ENCODE measurements at regions of chr1 and their contacts with region 1.

Region 1: GRCh38 chr1:23613191-23614031 is 54.1 kb upstream of the ID3 start:
- DNase-seq: peak; percentile 91
- H3K4me3 Mint-ChIP-seq: peak overlapping the region; percentile 14
- H3K27ac Mint-ChIP-seq: peak overlapping the region; percentile 88
- H3K4me1 Mint-ChIP-seq: peaks cover 71% of the 10 kb centered on the region
- H3K27me3 Mint-ChIP-seq: no peaks in the 10 kb centered on the region

Region 2: DNA sequence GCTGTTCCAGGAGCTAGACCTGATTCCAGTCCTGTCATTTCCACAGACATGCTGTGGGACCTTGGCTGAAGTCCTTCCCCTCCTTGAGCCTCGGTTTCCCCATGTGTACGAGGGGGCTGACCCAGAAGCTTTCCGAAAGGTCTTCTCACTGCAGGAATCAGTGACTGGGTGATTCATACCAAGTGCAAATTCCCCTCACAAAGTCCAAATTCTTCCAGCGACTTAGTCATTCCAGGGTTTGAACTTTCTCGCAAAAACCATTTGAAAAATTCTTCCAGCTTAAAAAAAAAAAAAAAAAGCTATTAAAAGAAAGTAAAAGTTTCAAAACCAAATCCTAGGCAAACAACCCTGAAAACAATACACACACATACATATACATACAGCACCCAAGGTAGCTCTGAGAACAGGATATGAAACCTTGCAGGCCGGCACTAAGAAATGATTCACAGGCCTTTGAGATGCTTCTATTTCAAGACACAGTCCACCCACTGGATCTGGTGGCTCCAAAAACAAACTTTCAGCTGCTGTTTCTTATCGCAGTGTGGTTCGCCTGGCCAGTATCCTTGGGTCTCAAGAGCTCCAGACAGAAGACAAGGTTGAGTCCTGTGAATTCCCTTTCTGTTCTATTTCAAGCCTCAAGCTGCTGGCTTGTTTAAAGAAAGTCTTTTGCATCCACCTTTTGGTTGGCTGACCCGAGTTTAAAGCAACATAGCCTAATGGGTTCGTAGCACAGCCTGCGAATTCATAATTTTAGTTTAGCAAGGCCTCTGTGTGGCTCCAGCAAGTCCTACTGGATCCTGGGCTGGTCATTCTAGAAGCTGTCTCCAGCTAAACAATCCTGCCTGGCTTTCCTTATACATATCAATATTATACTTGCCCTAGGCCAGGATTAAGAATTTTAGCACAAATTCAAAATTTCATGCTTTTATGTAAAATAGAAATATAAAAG is 36.1 kb before region 1 on chr1:
- CTCF ChIA-PET with region 1: no interaction called
- intact Hi-C with region 1: loop called (anchors 1 kb)
- DNase-seq: peak; percentile 77
- H3K4me3 Mint-ChIP-seq: peak overlapping the region; percentile 32
- H3K27ac Mint-ChIP-seq: peak overlapping the region; percentile 78
- H3K4me1 Mint-ChIP-seq: peaks cover 29% of the 10 kb centered on the region
- H3K27me3 Mint-ChIP-seq: no peaks in the 10 kb centered on the region

Region 3: GRCh38 chr1:23591460-23592208 is 21.8 kb before region 1 on chr1:
- CTCF ChIA-PET with region 1: interaction called, 8 read pairs
- intact Hi-C with region 1: loop called (anchors 1 kb)
- DNase-seq: peak; percentile 88
- H3K4me3 Mint-ChIP-seq: peak overlapping the region; percentile 34
- H3K27ac Mint-ChIP-seq: peak overlapping the region; percentile 85
- H3K4me1 Mint-ChIP-seq: peaks cover 68% of the 10 kb centered on the region
- H3K27me3 Mint-ChIP-seq: no peaks in the 10 kb centered on the region

Region 4: DNA sequence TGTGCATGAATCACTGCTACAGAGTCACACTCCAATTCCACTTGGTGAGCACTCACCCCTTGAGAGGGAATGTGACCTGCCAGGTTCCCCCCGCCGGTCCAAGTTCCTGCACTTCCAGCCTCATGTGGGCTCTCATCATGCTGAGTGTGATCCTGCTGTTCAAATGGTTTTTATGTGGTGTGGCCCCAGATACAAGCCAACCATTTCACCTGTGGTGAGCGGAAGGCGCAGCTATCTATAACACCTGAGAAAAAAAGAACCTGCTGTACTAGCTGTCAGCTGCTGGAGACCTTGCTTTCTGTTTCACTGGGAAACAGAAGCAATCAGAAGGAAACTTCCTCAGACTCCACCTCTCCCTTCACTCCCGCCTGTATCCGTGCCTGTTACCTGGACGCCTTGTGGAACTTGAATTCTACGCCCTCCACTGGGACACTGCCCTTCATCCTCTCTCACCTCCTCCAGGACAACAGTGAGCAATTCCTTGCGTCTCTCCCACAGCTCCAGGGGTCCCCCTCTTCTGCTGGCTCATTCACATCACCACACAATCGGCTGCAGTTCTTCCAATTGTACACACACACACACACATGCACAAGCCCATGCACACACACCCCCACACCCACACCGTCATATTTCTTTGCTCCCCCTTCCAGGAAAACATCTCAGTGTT is 13.8 kb after region 1 on chr1:
- CTCF ChIA-PET with region 1: interaction called, 4 read pairs
- intact Hi-C with region 1: loop called (anchors 1 kb)
- DNase-seq: peak; percentile 63
- H3K4me3 Mint-ChIP-seq: peak overlapping the region; percentile 82
- H3K27ac Mint-ChIP-seq: peak overlapping the region; percentile 83
- H3K4me1 Mint-ChIP-seq: peaks cover 53% of the 10 kb centered on the region
- H3K27me3 Mint-ChIP-seq: no peaks in the 10 kb centered on the region

Region 5: GRCh38 chr1:23643736-23644554 is 30.5 kb after region 1 on chr1:
- CTCF ChIA-PET with region 1: no interaction called
- intact Hi-C with region 1: no loop called
- DNase-seq: no peak
- H3K4me3 Mint-ChIP-seq: no peak overlapping the region
- H3K27ac Mint-ChIP-seq: no peak overlapping the region
- H3K4me1 Mint-ChIP-seq: no peaks in the 10 kb centered on the region
- H3K27me3 Mint-ChIP-seq: no peaks in the 10 kb centered on the region